Calu3 (cell line): ENCODE measurements at regions of chr13 and their contacts with region 1.

Region 1: DNA sequence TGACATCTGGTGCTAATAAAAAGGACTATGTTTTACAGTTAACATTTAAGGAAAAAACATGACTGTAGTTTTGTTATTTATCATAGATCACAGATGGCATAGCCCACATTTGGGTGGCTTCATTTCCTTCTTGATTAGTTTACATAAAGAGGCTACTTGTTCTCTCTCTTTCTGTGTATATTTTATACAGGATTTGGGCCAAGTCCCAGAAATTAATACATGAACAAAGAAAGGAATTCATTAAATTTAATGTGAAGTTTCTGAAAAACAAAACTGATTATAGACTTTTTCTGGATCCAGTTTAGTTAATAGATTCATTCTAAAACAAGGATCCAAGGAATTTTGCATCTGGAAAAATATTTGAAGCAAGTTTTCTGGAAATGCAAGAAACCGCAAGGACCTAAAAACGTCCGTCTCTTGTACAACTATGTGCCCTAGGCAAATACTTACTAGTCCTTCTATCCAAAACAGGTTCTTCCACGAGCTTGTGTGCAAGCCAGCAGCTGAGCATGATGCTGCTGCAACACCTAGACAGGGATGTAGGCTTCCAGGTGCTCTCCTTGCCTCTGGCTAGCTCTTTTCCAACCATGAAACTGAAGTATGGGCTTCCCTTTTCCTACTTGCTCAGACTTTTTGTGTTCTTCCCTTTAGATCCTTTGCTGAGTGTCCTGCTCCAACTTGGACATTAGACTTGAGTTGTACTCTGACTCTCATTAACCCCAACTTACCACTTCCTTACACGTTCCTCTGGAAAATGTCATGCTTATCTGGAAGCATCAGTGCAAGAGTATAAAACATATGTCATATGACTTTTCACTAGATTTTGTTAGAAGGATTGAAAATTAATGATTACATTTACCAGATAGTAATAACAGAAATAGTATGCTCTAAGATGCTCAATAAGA is 161.5 kb upstream of the STARD13 start:
- DNase-seq: no peak
- H3K4me3 Mint-ChIP-seq: no peak overlapping the region
- H3K27ac Mint-ChIP-seq: no peak overlapping the region
- H3K4me1 Mint-ChIP-seq: peaks cover 9% of the 10 kb centered on the region
- H3K27me3 Mint-ChIP-seq: no peaks in the 10 kb centered on the region
- CTCF ChIP-seq: no peak

Region 2: DNA sequence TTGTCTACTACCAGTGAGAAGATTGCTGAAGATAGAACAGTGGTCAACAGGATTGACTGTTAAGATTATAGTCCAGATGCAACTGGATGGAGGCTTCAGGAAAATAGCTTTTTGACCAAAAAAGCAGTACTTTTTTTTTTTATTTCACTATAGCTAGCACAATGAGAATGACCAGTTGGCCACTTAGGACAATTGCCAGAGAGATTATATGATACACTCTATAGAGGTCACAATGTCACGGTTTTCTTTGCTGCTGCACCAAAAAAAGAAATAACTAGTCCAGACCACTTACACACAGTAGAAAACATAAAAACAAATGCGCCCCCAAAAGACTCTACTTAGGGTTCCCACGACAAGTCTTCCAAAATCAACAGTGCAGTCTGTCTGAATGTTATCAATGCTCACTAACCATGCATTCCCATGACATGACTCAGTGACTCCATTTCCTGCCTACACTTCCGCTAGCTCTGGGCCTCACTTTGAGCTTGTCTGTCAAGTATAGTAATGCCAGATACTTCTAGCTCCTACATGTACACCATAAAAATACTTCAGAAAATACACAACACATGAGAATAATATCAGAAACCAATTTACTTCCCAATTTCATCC is 47.6 kb after region 1 on chr13:
- CTCF ChIA-PET with region 1: interaction called, 3 read pairs
- intact Hi-C with region 1: loop called (anchors 5 kb)
- DNase-seq: no peak
- H3K4me3 Mint-ChIP-seq: no peak overlapping the region
- H3K27ac Mint-ChIP-seq: peak overlapping the region; percentile 79
- H3K4me1 Mint-ChIP-seq: peaks cover 33% of the 10 kb centered on the region
- H3K27me3 Mint-ChIP-seq: no peaks in the 10 kb centered on the region
- CTCF ChIP-seq: no peak

Region 3: DNA sequence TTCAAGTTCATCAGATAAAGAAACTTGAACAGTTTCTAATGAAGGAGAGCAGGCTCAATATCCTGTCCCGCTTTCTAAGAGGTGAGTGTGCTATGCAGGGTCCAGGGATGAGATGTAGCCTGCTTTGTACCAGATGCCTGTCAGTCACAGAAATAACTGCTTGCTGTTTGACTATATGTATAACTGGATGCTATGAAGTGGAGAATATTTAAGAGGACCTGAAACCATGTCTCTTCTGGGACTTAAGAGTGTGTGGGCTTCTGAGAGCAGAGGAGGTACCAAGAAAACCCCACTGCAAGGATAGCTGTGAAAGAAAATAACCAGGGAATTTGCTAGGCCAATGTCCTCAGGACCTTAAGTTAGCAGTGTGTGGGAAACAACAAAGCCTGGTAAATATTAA is 124.5 kb after region 1 on chr13:
- CTCF ChIA-PET with region 1: no interaction called
- intact Hi-C with region 1: no loop called
- DNase-seq: no peak
- H3K4me3 Mint-ChIP-seq: no peak overlapping the region
- H3K27ac Mint-ChIP-seq: no peak overlapping the region
- H3K4me1 Mint-ChIP-seq: no peaks in the 10 kb centered on the region
- H3K27me3 Mint-ChIP-seq: no peaks in the 10 kb centered on the region
- CTCF ChIP-seq: no peak

Region 4: DNA sequence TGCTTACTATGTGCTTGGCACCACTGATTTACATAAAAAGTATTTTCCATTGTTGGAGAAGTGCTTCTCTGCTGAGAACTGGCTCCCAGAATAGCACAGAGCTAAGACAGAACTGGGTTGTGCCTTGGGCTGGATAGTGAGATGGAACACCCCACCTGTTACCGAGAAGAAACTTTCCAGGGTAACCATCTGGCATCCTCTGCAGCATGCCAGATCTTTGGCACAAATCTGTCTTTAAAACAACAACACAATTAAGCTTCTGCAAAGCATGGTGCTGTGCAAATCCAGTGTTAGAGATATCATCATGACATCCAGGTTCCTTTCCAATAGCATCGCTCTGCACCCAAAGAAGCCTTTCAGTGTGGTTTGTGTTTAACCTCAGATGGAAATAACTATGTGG is 168.4 kb after region 1 on chr13:
- CTCF ChIA-PET with region 1: no interaction called
- intact Hi-C with region 1: no loop called
- DNase-seq: no peak
- H3K4me3 Mint-ChIP-seq: no peak overlapping the region
- H3K27ac Mint-ChIP-seq: no peak overlapping the region
- H3K4me1 Mint-ChIP-seq: no peaks in the 10 kb centered on the region
- H3K27me3 Mint-ChIP-seq: peaks cover 12% of the 10 kb centered on the region
- CTCF ChIP-seq: no peak